ENCODE measurements at regions of chr7 and their contacts with region 1.

Region 1: DNA sequence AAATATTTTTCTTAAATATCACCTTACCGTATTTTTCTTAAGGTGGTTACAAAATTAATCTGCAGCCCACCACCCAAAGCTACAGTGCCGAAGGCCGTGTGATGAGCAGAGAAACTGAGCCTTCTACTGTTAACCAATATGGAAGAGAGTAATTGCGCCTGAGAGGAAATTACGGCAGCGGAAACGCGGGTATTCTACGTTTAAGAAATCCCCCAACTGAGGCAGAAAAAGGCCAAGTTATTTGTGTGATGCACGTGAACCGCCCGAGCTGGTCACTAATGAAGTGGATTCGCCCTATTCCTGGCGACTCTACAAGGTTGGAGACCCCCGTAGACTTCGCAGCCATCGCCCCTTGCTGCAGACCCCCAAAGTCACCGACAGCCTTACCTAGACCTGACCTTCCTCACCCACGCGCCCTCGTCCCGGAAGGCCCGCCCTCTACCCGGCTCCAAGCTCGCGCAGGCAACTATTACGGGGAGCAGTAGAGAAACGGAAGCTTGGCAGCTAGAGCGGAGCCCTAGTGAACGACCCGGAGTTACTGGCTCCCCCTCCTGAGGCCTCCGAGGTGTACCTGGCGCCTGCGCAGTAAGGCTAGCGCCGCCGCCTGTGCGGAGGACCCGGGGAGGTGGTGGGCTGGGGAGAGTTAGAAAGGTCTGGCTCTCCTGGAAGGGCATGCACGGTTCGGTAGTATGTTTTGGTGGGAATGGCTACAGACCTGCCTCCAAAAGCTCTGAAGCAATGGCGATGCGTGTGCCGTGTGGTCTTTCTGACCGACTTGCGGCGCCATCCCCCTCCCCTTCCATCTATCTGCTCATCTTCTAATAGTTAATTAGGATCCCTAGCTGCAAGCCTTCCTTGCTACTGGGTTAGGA is at the start of gene MRPS33:
- DNase-seq: peak; percentile 97
- ATAC-seq: peak; percentile 91
- H3K4me3 Mint-ChIP-seq: peak within 1 kb of the TSS; percentile 96
- H3K27ac Mint-ChIP-seq: peak within 1 kb of the TSS; percentile 99
- H3K4me1 Mint-ChIP-seq: peaks cover 32% of the 10 kb centered on the region
- H3K27me3 Mint-ChIP-seq: peaks cover 9% of the 10 kb centered on the region
- total RNA-seq, gene MRPS33: 101 to 104 TPM

Region 2: DNA sequence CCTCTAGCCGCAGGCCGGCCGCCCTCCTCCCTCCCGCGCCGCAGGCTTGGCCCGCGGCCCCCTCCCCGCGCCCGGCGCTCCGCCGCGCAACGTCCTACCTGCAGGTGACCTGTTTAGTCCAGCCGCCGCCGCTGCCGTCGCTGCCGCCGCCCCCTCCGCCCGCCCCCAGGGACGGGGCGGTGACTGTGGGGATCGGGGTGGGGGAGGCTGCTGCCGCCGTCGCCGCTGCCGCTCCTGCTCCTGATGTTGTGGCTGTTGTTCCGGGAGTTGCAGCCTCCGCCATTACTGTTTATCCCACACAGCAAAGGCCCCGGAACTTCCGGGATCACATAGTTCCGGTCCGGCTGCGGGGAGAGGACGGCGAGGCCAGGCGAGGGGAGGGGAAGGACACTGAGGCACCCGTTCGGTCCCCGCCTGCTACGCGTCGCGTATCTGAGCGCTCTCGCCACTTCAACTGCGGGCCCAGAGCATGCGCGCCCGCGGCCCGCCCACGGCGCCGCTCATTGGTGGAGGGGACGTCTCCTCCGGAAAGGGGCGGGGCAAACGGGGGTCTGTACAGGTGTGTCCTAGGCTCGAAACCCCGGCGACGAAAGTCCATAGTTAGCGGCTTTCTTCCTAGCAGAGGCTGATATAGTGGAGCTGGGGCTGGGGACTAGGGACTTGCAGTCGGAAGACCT is 535.6 kb before region 1 on chr7 and contains the start of gene MKRN1:
- CTCF ChIA-PET with region 1: no interaction called
- POLR2A ChIA-PET with region 1: no interaction called
- intact Hi-C with region 1: loop called (anchors 1 kb)
- DNase-seq: peak; percentile 97
- ATAC-seq: peak; percentile 95
- H3K4me3 Mint-ChIP-seq: peak within 1 kb of the TSS; percentile 99
- H3K27ac Mint-ChIP-seq: peak within 1 kb of the TSS; percentile 95
- H3K4me1 Mint-ChIP-seq: peaks cover 24% of the 10 kb centered on the region
- H3K27me3 Mint-ChIP-seq: no peaks in the 10 kb centered on the region
- total RNA-seq, gene MKRN1: 73.6 to 77.9 TPM

Region 3: DNA sequence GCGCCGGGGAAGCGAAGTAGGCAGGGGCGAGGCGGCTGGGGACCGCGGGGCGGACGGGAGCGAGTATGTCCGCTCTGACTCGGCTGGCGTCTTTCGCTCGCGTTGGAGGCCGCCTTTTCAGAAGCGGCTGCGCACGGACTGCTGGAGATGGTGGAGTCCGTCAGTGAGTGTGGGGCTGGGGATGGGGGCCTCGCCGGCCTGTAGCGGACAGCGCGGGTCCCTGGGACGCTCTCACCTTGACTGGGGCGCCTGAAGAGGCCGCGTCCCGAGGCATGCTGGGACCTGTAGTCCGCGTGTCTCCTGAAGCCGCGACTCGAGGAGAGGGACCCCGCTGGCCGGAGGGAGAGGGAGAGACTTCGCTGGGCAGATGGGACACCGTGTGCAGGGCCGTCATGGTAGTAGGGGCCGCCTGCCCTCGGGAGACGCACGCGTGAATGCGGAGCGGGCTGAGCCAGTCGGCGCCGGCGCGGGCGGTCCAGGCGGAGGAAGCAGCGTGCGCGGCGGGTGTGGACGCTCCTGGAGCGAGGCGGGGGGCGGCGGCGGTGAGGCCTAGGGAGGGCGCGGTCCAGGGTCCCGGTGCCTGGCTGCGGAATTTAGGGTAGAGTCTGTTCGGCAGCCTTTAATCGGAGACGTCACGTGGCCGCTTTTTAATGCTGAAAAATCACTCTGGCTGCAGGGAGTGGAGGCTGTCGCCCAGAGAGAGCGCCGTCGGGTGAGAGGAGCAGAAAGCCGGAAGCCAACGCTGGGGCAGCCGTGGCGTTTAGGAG is 317.9 kb before region 1 on chr7 and contains the start of gene NDUFB2:
- CTCF ChIA-PET with region 1: interaction called, 4 read pairs
- POLR2A ChIA-PET with region 1: no interaction called
- intact Hi-C with region 1: loop called (anchors 1 to 2 kb)
- DNase-seq: peak; percentile 84
- ATAC-seq: peak; percentile 91
- H3K4me3 Mint-ChIP-seq: peak within 1 kb of the TSS; percentile 90
- H3K27ac Mint-ChIP-seq: peak within 1 kb of the TSS; percentile 97
- H3K4me1 Mint-ChIP-seq: peaks cover 30% of the 10 kb centered on the region
- H3K27me3 Mint-ChIP-seq: no peaks in the 10 kb centered on the region
- total RNA-seq, gene NDUFB2: 83.8 to 162 TPM

Region 4: DNA sequence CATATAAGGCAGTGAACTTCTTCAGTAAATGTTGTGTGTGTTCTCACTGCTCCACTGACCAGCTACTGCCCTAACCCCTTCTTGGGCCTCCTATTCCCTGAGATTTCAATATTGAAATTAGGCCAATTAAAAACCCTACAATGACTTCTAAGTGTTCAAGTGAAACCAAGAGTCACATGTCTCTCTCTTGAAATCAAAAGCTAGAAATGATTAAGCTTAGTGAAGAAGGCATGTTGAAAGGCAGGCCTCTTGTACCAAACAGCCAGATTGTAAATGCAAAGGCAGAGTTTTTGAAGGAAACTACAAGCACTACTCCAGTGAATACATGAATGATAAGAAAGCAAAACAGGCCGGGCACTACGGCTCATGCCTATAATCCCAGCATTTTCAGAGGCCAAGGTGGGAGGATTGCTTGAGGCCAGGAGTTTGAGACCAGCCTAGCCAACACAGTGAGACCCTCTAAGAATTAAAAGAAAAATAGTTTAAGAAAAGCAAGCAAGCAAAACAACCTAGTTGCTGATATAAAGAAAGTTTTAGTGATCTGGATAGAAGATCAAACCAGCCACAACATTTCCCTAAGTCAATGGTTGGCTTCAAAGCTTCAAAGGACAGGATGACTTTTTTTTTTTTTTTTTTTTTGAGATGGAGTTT is 112.3 kb before region 1 on chr7:
- CTCF ChIA-PET with region 1: interaction called, 4 read pairs
- POLR2A ChIA-PET with region 1: no interaction called
- intact Hi-C with region 1: loop called in 1 of 2 experiments (anchors 5 kb)
- DNase-seq: no peak
- ATAC-seq: peak; percentile 83
- H3K4me3 Mint-ChIP-seq: peak overlapping the region; percentile 42
- H3K27ac Mint-ChIP-seq: peak overlapping the region; percentile 95
- H3K4me1 Mint-ChIP-seq: peaks cover 68% of the 10 kb centered on the region
- H3K27me3 Mint-ChIP-seq: no peaks in the 10 kb centered on the region

Region 5: GRCh38 chr7:141072548-141073172 is 57.9 kb after region 1 on chr7:
- CTCF ChIA-PET with region 1: no interaction called
- POLR2A ChIA-PET with region 1: interaction called, 3 read pairs
- intact Hi-C with region 1: loop called in 1 of 2 experiments (anchors 2 kb)
- DNase-seq: peak; percentile 54
- ATAC-seq: peak; percentile 42
- H3K4me3 Mint-ChIP-seq: peak overlapping the region; percentile 52
- H3K27ac Mint-ChIP-seq: no peak overlapping the region
- H3K4me1 Mint-ChIP-seq: peaks cover 16% of the 10 kb centered on the region
- H3K27me3 Mint-ChIP-seq: peaks cover 48% of the 10 kb centered on the region

Region 6: DNA sequence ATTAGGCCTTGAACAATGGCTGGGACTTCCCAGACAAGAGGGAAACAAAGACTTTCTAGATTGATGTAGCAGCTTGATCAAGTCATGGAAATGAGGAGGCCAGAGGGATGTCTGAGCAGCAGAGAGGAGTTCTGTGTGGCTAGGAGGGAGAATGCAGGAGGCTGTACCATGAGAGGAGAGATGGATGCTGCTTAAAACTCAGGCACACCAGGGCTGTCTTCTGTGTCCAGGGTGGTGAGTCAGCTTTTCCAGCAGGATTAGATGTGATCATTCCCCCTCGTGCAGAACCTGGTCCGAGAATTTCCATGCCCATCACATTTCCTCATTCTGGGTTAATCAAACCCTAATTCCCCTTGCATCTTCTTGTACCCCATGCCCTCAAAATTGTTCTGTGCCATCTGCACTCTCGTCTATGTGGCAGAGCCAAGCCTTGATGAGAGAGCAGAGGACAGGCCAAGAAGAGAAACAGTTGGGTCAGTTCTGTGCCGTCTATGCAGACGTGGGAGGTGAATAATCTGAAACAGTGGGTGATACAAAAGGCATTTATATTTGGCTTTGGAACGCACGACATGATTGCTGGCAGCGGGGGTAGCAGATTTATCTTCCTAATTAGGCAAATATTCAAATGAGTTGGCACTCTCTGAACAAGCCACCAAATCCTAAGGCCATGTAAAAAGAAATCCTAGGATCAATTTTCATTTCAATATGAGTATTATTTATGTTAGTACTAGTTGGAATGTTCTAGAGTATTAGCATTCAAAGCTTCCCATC is 219.8 kb after region 1 on chr7:
- CTCF ChIA-PET with region 1: no interaction called
- POLR2A ChIA-PET with region 1: no interaction called
- intact Hi-C with region 1: no loop called
- DNase-seq: no peak
- ATAC-seq: no peak
- H3K4me3 Mint-ChIP-seq: no peak overlapping the region
- H3K27ac Mint-ChIP-seq: no peak overlapping the region
- H3K4me1 Mint-ChIP-seq: no peaks in the 10 kb centered on the region
- H3K27me3 Mint-ChIP-seq: peaks cover 24% of the 10 kb centered on the region

Region 7: GRCh38 chr7:141737834-141738591 is 723.3 kb after region 1 on chr7 and contains the start of gene SSBP1:
- CTCF ChIA-PET with region 1: interaction called, 3 read pairs
- POLR2A ChIA-PET with region 1: interaction called, 4 read pairs
- intact Hi-C with region 1: loop called in 1 of 2 experiments (anchors 1 kb)
- DNase-seq: peak; percentile 95
- ATAC-seq: peak; percentile 89
- H3K4me3 Mint-ChIP-seq: peak within 1 kb of the TSS; percentile 96
- H3K27ac Mint-ChIP-seq: peak within 1 kb of the TSS; percentile 97
- H3K4me1 Mint-ChIP-seq: peaks cover 40% of the 10 kb centered on the region
- H3K27me3 Mint-ChIP-seq: no peaks in the 10 kb centered on the region
- total RNA-seq, gene SSBP1: 183 to 245 TPM

Measured in activated CD4-positive, alpha-beta T cell treated with anti-CD3 and anti-CD28 coated beads for 36 hours (primary cell).